Dendritic cell treated with granulocyte-macrophage colony-stimulating factor and Interleukin-4, amounts not matched to agents 40 ng/mL and 50 ng/mL, for 4 days (primary cell): ENCODE measurements at regions of chr2 and their contacts with region 1.

Region 1: GRCh38 chr2:71157124-71157793 is 26.8 kb downstream of the MPHOSPH10 start:
- H3K4me3 Mint-ChIP-seq: no peak overlapping the region
- H3K27ac Mint-ChIP-seq: no peak overlapping the region
- H3K4me1 Mint-ChIP-seq: peaks cover 21% of the 10 kb centered on the region
- H3K27me3 Mint-ChIP-seq: peaks cover 9% of the 10 kb centered on the region

Region 2: DNA sequence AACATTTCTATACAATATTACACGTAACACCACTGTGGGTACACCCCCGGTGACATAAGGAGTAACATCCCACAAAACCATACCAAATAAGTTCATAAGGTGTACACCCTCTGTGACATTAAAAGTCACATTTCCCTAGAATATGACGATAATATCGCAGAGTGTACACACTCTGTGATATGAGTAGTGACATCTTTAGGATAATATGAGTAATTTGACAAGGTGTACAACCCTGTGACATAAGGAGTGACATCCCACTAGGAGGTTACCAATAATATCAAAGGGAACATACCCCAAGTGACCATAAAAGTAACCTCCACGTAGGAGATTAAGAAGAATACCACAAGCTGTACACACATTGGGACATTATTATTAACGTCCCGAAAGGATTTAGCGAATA is 138.6 kb before region 1 on chr2:
- intact Hi-C with region 1: loop called (anchors 10 kb)
- H3K4me3 Mint-ChIP-seq: no peak overlapping the region
- H3K27ac Mint-ChIP-seq: no peak overlapping the region
- H3K4me1 Mint-ChIP-seq: peaks cover 6% of the 10 kb centered on the region
- H3K27me3 Mint-ChIP-seq: no peaks in the 10 kb centered on the region

Region 3: GRCh38 chr2:71130113-71130904 is 26.9 kb before region 1 on chr2 and contains the starts of genes MCEE and MPHOSPH10:
- intact Hi-C with region 1: no loop called
- H3K4me3 Mint-ChIP-seq: no peak within 1 kb of the TSS
- H3K27ac Mint-ChIP-seq: no peak within 1 kb of the TSS
- H3K4me1 Mint-ChIP-seq: no peaks in the 10 kb centered on the region
- H3K27me3 Mint-ChIP-seq: no peaks in the 10 kb centered on the region

Region 4: GRCh38 chr2:72051971-72052505 is 894.8 kb after region 1 on chr2:
- intact Hi-C with region 1: no loop called
- H3K4me3 Mint-ChIP-seq: no peak overlapping the region
- H3K27ac Mint-ChIP-seq: no peak overlapping the region
- H3K4me1 Mint-ChIP-seq: no peaks in the 10 kb centered on the region
- H3K27me3 Mint-ChIP-seq: no peaks in the 10 kb centered on the region